Activated CD4-positive, alpha-beta memory T cell treated with anti-CD3 and anti-CD28 coated beads for 36 hours (primary cell): ENCODE measurements at regions of chr4 and their contacts with region 1.

Region 1: DNA sequence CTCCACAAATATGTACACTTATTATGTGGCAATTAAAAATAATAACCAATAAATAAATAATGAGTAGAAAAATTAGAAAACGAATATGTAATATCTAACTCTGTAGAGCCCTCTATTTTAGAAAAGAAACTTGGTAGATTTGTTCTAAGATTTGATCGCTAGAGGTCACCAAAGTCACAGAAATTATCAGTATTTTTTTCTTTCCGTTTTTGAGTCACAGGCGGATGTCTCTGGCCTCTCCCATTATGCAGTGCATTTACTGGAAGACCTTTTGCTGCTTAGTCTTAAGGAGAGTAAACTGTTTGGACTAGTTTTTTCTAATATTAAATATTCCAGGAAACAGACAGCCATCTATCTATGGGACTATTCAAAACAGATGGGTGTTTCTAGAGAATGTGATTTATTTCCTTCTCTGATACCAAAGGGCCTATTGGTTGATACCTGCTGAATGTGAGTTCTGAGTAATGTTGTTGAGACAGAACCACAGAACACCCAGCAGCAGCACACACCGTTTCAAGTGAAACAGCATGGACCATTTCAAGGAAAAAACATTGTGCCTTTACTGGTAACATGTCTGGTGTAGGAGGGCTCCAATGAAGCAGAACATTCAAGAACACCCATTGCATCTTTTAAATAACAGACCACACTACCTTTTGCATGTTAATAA is 34.0 kb upstream of the GYPA start:
- DNase-seq: peak; percentile 40
- H3K4me3 Mint-ChIP-seq: no peak overlapping the region
- H3K27ac Mint-ChIP-seq: peak overlapping the region; percentile 70
- H3K4me1 Mint-ChIP-seq: peaks cover 18% of the 10 kb centered on the region
- H3K27me3 Mint-ChIP-seq: peaks cover 3% of the 10 kb centered on the region

Region 2: GRCh38 chr4:144627663-144628076 is 453.1 kb after region 1 on chr4:
- CTCF ChIA-PET with region 1: no interaction called
- POLR2A ChIA-PET with region 1: no interaction called
- intact Hi-C with region 1: no loop called
- DNase-seq: no peak
- H3K4me3 Mint-ChIP-seq: no peak overlapping the region
- H3K27ac Mint-ChIP-seq: no peak overlapping the region
- H3K4me1 Mint-ChIP-seq: no peaks in the 10 kb centered on the region
- H3K27me3 Mint-ChIP-seq: no peaks in the 10 kb centered on the region

Region 3: DNA sequence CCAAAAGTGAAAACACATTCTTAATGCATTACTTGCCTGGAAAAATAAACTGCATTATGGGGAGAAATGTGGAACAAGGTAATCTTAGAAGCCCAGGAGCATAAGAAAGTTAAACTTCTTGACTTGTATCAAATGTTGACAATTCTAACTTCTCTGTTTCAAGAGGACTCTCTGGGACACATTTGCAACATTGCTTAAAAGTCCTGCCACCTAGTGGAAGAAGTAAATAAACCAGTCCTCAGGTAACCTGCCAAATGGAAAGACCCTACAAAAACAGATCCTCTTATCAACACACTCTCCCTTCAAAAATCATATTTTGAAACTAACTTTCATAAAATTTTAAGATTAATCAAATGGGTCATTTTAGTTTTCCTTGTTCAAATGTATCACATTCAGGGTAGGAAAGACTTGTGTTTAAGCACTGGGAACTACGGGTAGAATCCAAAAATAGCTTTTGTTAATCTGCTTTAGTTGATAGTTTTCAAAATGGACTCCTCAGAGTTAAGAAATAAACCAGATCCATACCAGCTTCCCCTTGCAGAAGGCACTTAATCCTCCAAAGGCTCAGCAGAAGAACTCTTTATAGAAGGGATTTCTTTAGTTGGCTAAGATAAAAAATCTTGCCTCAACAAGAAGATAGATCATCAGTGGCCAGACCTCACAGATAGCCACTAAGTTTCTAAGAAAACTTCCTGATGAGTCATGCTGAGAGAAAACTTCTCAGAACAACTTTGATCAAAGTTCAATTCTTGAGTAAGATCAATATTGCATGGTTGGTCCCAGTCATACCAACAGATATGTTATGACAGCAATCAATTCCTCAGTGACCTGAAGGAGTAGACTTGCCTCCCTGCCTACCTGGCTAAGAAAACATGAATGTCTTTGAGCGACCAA is 613.1 kb after region 1 on chr4:
- CTCF ChIA-PET with region 1: no interaction called
- POLR2A ChIA-PET with region 1: no interaction called
- intact Hi-C with region 1: loop called (anchors 1 kb)
- DNase-seq: no peak
- H3K4me3 Mint-ChIP-seq: no peak overlapping the region
- H3K27ac Mint-ChIP-seq: no peak overlapping the region
- H3K4me1 Mint-ChIP-seq: no peaks in the 10 kb centered on the region
- H3K27me3 Mint-ChIP-seq: no peaks in the 10 kb centered on the region

Region 4: GRCh38 chr4:144845411-144845810 is 670.9 kb after region 1 on chr4:
- CTCF ChIA-PET with region 1: no interaction called
- POLR2A ChIA-PET with region 1: no interaction called
- intact Hi-C with region 1: no loop called
- DNase-seq: no peak
- H3K4me3 Mint-ChIP-seq: no peak overlapping the region
- H3K27ac Mint-ChIP-seq: no peak overlapping the region
- H3K4me1 Mint-ChIP-seq: no peaks in the 10 kb centered on the region
- H3K27me3 Mint-ChIP-seq: no peaks in the 10 kb centered on the region

Region 5: DNA sequence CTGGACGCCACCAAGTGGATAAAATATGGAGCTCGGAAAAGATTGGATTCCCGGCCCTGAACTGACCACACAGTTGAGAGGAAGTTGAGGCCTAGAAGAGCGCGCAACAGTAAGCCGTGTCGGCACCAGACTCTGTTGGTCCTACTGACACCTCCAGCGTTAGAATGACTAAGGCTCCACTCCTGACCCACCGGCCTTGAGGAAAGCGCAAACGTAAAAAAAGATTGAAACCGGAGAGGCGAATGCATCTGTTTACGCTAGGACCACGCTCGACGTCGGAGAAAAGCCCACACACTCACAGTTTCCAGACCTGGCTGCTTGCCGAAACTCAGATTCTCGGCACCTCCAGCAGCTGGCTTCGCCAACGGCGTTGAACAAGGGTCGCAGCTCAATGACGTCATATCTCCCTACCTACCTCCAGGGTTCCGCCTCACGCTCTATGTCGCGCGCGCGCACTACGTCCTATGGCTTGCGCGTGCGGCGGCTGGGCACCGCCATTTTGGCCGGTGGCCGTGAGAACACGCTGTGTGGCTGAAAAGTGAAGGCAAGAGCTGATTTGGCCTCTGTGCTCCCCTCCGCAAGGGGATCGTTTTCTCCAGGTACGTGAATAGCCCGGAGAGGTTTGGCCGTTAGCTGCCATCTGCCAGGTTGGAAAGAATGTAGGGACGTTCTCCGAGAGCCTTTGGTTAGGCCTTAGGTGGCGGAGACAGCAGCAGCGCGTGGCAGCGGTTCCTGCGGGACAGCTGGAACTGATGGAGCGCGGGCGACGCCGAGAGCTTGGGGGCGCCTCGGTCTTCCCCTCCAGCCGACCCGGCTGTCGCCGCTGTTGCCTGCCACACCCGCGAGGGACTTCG is 923.5 kb after region 1 on chr4 and contains the starts of genes ABCE1 and ANAPC10:
- CTCF ChIA-PET with region 1: interaction called, 4 read pairs
- POLR2A ChIA-PET with region 1: no interaction called
- intact Hi-C with region 1: loop called (anchors 1 kb)
- DNase-seq: peak; percentile 97
- H3K4me3 Mint-ChIP-seq: peak within 1 kb of the TSS; percentile 87
- H3K27ac Mint-ChIP-seq: peak within 1 kb of the TSS; percentile 97
- H3K4me1 Mint-ChIP-seq: peaks cover 20% of the 10 kb centered on the region
- H3K27me3 Mint-ChIP-seq: no peaks in the 10 kb centered on the region
- total RNA-seq, gene ABCE1: 138 to 145 TPM
- total RNA-seq, gene ANAPC10: 28.2 to 28.3 TPM

Region 6: DNA sequence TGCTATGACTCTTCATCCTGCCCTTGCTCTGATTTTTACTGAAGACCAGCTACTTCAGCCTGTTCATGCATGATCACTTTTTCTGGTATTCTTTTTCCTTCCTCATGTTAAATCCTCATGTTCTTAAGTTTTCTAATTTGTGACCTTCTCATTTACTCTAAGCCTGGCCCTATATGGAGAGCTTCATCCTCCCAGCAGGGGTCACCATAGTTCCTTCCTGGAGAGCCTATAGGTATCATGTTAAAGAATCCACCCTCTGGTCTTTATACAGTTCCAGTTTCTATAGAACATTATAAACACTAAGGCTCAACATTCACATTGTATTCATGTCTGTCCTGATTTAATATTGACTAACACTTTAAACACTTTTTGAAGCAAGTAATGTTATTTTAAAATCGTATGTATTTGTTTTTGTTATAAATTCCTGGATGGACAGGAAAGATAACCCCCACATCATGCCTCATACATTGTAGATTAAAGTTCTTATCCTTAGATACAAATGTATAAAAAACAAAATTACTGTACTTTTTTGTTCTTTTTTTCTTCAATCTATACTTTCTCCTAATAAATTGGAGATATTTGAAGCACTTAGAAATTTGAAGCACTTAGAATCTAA is 1059.7 kb after region 1 on chr4:
- CTCF ChIA-PET with region 1: no interaction called
- POLR2A ChIA-PET with region 1: no interaction called
- intact Hi-C with region 1: loop called (anchors 1 kb)
- DNase-seq: peak; percentile 65
- H3K4me3 Mint-ChIP-seq: no peak overlapping the region
- H3K27ac Mint-ChIP-seq: no peak overlapping the region
- H3K4me1 Mint-ChIP-seq: no peaks in the 10 kb centered on the region
- H3K27me3 Mint-ChIP-seq: no peaks in the 10 kb centered on the region

Region 7: DNA sequence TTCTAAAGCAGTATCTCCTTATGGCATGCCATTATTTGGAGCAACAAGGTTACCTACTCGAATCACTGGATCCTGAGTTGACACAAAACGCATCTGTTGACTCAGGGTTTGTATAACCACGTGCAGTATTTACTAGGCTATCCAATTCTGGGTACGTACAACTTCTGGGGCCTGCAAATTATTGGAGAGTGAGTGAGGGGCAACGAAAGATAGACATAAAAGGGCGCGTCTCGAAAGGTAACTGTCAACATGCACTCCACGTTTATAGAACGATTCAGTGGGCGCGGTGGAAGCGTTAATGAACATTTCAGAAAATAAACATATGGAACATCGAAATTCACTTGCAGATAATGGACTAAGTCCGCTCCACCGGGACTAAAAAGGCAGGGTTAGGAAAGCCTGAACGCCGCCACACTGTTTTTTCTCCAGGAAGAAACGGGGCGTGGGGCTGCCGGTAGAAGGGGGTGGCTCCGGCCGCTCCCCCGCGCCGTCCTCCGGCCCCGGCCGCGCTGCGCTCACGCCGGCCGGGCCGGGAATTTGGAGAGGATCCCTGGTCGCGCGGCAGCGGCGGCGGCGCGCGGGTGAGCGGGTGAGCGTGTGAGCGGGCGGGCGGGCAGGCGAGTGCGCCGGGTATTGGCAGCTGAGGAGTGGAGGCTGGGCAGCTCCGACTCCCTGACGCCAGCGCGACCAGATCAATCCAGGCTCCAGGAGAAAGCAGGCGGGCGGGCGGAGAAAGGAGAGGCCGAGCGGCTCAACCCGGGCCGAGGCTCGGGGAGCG is 1306.8 kb after region 1 on chr4 and contains the start of gene SMAD1:
- CTCF ChIA-PET with region 1: no interaction called
- POLR2A ChIA-PET with region 1: no interaction called
- intact Hi-C with region 1: loop called (anchors 10 kb)
- DNase-seq: peak; percentile 53
- H3K4me3 Mint-ChIP-seq: peak within 1 kb of the TSS; percentile 66
- H3K27ac Mint-ChIP-seq: no peak within 1 kb of the TSS
- H3K4me1 Mint-ChIP-seq: peaks cover 8% of the 10 kb centered on the region
- H3K27me3 Mint-ChIP-seq: peaks cover 38% of the 10 kb centered on the region
- total RNA-seq, gene SMAD1: 2.8 to 2.9 TPM

Region 8: DNA sequence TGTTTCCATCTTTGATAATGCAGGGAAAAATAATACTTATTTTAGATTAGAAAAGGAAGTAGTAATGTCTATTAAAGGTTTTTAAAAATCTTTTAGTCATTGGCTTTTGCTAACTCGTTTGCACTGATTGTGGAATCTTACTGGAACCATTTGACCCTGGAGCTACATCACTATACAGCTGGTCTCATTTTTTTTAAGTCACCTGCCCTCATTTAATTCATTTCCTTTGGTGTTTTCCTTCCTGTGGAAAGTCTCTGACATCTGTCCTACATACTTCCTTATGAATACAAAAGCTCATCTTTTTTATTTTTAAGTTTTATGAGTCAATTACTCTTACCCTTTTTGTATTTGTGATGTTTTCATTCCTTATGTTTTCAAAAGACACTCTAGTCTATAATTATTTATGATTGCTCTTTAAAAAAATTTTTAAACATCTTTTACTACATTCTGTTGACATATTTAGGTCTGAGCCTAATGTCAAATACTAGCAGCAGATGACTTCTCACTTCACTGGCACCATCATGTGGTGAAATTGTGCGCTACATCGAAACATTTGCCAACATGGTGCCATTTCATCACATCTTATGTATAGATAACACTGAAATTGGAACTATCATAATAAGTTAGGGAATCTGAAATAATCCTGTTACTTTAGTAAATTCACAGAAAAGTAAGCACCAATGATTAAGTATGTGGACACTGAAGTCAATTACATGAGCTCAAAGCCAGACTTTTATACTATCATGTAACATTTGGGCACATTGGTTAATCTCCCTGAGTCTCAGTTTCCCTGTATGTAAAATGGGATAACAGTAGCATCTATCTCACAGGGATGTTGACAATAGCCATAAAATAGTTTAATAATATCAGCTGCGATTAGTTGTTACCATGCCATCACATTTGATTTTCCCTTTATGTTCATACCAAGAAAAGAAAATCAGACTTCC is 1435.2 kb after region 1 on chr4:
- CTCF ChIA-PET with region 1: interaction called, 3 read pairs
- POLR2A ChIA-PET with region 1: no interaction called
- intact Hi-C with region 1: loop called (anchors 1 kb)
- DNase-seq: peak; percentile 80
- H3K4me3 Mint-ChIP-seq: no peak overlapping the region
- H3K27ac Mint-ChIP-seq: no peak overlapping the region
- H3K4me1 Mint-ChIP-seq: peaks cover 11% of the 10 kb centered on the region
- H3K27me3 Mint-ChIP-seq: peaks cover 4% of the 10 kb centered on the region